ENCODE measurements at regions of chr15 and their contacts with region 1.

Region 1: DNA sequence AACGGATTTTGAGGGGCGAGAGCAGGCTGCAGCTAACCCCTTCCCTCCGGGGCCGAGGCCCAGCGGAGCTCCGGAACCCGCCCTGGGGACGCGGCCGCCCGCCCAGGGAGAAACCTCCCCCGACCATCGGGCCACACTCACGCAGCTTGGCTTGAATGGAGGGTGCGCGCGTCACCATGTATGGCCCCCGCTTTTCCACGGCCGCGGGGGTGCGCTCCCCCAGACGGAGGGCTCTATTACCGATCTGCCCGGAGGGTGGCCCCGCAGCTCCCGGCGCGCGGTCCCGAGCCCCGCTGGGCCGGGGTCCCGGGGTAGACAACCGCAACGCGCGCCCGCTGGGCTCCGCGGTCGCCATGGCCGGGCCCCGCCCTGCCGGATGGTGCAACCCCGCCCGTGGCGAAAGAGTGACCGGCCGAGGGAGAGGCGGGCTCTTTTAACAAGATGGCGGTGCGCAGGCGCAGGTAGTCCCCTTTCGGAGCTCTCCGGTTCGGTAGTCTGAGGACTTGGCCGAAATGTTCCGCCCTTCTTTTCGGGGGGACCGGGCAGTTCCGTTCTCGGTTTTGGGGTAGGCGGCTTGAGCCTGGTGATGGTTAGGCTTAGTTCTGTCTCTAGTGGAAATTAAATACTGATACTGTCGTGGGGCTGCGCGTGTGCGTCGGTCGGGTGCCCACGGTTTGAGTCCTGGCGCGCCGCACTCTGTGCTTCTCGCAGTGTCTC is at the start of gene FAM219B:
- DNase-seq: peak; percentile 78 to 82
- ATAC-seq: peak; percentile 92 to 95 (median 93)
- H3K4me3 ChIP-seq: peak within 1 kb of the TSS; percentile 90
- H3K4me3 Mint-ChIP-seq: peak within 1 kb of the TSS; percentile 98
- H3K27ac ChIP-seq: peak within 1 kb of the TSS; percentile 75
- H3K27ac Mint-ChIP-seq: peak within 1 kb of the TSS; percentile 93 to 96
- H3K4me1 ChIP-seq: peaks cover 27% of the 10 kb centered on the region
- H3K4me1 Mint-ChIP-seq: peaks cover 20 to 33% of the 10 kb centered on the region in 2 donors
- H3K27me3 ChIP-seq: no peaks in the 10 kb centered on the region
- H3K27me3 Mint-ChIP-seq: no peaks in the 10 kb centered on the region
- CTCF ChIP-seq: no peak
- total RNA-seq, gene FAM219B: 63.5 to 107 (median 69.0) TPM

Region 2: GRCh38 chr15:74768771-74769342 is 137.7 kb before region 1 on chr15:
- intact Hi-C with region 1: loop called (anchors 1 kb)
- DNase-seq: peak; percentile 53 to 80
- ATAC-seq: peak; percentile 60 to 68 (median 65)
- H3K4me3 ChIP-seq: no peak overlapping the region
- H3K4me3 Mint-ChIP-seq: no peak overlapping the region
- H3K27ac ChIP-seq: no peak overlapping the region
- H3K27ac Mint-ChIP-seq: peak overlapping the region in 1 of 2 donors; percentile 35
- H3K4me1 ChIP-seq: peaks cover 26% of the 10 kb centered on the region
- H3K4me1 Mint-ChIP-seq: peaks cover 6 to 11% of the 10 kb centered on the region in 2 donors
- H3K27me3 ChIP-seq: no peaks in the 10 kb centered on the region
- H3K27me3 Mint-ChIP-seq: peaks cover 7 to 11% of the 10 kb centered on the region in 2 donors
- CTCF ChIP-seq: peak; percentile 82

Region 3: DNA sequence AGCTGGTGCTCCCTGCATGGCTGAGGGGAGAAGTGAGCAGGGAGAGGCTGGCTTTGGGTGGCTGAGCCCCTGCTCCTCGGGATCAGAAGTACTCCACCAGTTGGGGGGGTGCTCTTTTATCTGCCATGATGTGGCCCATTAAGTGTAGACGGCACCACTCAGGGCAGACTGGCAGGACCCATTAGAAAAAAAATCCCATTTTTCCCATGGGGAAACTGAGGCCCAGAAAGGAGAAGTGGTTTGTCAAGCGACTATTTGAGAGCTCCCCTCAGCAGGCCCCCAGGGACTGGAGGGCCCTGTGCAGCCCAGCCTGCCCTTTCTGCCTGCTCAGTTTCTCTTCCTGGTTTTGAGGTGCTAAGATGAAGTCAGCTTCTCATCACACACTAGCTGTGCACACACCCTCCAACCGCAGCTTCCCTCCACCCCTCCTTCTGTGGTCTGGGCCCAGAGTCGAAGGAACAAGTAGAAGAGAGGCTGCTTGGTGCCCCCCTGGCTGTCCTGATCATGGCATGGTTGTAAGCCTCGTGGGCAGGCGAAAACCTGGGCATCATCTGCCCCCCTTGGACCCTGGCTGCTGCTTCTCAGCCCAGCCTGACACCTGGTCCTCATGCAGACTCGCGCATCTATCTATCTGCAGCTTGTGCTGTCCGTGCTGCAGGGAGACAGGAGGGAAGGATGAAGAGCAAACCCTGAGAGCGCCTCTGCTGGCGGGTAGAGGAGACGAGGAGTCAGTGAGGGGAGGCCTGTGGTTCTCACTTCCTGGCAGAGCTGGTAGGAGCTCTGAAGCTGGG is 119.2 kb before region 1 on chr15:
- intact Hi-C with region 1: no loop called
- DNase-seq: peak; percentile 91 to 96
- ATAC-seq: peak; percentile 57 to 83 (median 75)
- H3K4me3 ChIP-seq: peak overlapping the region; percentile 43
- H3K4me3 Mint-ChIP-seq: peak overlapping the region; percentile 97
- H3K27ac ChIP-seq: peak overlapping the region; percentile 94
- H3K27ac Mint-ChIP-seq: peak overlapping the region; percentile 95 to 100
- H3K4me1 ChIP-seq: peaks cover 92% of the 10 kb centered on the region
- H3K4me1 Mint-ChIP-seq: peaks cover 87 to 98% of the 10 kb centered on the region in 2 donors
- H3K27me3 ChIP-seq: no peaks in the 10 kb centered on the region
- H3K27me3 Mint-ChIP-seq: no peaks in the 10 kb centered on the region
- CTCF ChIP-seq: peak; percentile 72

Region 4: GRCh38 chr15:74842581-74843444 is 63.8 kb before region 1 on chr15 and contains the start of gene ULK3:
- intact Hi-C with region 1: loop called (anchors 5 kb)
- DNase-seq: peak; percentile 93 to 95
- ATAC-seq: peak; percentile 92 to 98 (median 93)
- H3K4me3 ChIP-seq: peak within 1 kb of the TSS; percentile 90
- H3K4me3 Mint-ChIP-seq: peak within 1 kb of the TSS; percentile 91
- H3K27ac ChIP-seq: peak within 1 kb of the TSS; percentile 80
- H3K27ac Mint-ChIP-seq: peak within 1 kb of the TSS; percentile 91
- H3K4me1 ChIP-seq: peaks cover 48% of the 10 kb centered on the region
- H3K4me1 Mint-ChIP-seq: peaks cover 18 to 49% of the 10 kb centered on the region in 2 donors
- H3K27me3 ChIP-seq: no peaks in the 10 kb centered on the region
- H3K27me3 Mint-ChIP-seq: no peaks in the 10 kb centered on the region
- CTCF ChIP-seq: peak; percentile 70
- total RNA-seq, gene ULK3: 54.8 to 75.1 (median 64.7) TPM

Region 5: GRCh38 chr15:74889883-74890664 is 16.5 kb before region 1 on chr15 and contains the start of gene MPI:
- intact Hi-C with region 1: loop called (anchors 2 kb)
- DNase-seq: peak; percentile 75 to 89
- ATAC-seq: peak; percentile 97 to 100 (median 100)
- H3K4me3 ChIP-seq: peak within 1 kb of the TSS; percentile 65
- H3K4me3 Mint-ChIP-seq: peak within 1 kb of the TSS; percentile 86
- H3K27ac ChIP-seq: peak within 1 kb of the TSS; percentile 56
- H3K27ac Mint-ChIP-seq: peak within 1 kb of the TSS; percentile 85 to 87
- H3K4me1 ChIP-seq: peaks cover 42% of the 10 kb centered on the region
- H3K4me1 Mint-ChIP-seq: peaks cover 27 to 36% of the 10 kb centered on the region in 2 donors
- H3K27me3 ChIP-seq: no peaks in the 10 kb centered on the region
- H3K27me3 Mint-ChIP-seq: no peaks in the 10 kb centered on the region
- CTCF ChIP-seq: no peak
- total RNA-seq, gene MPI: 15.7 to 20.4 (median 18.8) TPM

Region 6: GRCh38 chr15:74937596-74938296 is 31.1 kb after region 1 on chr15 and contains the start of gene COX5A:
- intact Hi-C with region 1: loop called (anchors 2 kb)
- DNase-seq: peak; percentile 90 to 96
- ATAC-seq: peak; percentile 94 to 99 (median 96)
- H3K4me3 ChIP-seq: peak within 1 kb of the TSS; percentile 90
- H3K4me3 Mint-ChIP-seq: peak within 1 kb of the TSS; percentile 93
- H3K27ac ChIP-seq: peak within 1 kb of the TSS; percentile 83
- H3K27ac Mint-ChIP-seq: peak within 1 kb of the TSS; percentile 84 to 85
- H3K4me1 ChIP-seq: peaks cover 20% of the 10 kb centered on the region
- H3K4me1 Mint-ChIP-seq: peaks cover 23 to 28% of the 10 kb centered on the region in 2 donors
- H3K27me3 ChIP-seq: no peaks in the 10 kb centered on the region
- H3K27me3 Mint-ChIP-seq: no peaks in the 10 kb centered on the region
- CTCF ChIP-seq: no peak
- total RNA-seq, gene COX5A: 69.7 to 90.0 (median 76.9) TPM

Measured in natural killer cell (primary cell).